ENCODE measurements at regions of chr10 and their contacts with region 1.

Region 1: GRCh38 chr10:17353559-17354300 is 100.7 kb downstream of the ST8SIA6 start:
- DNase-seq: no peak
- ATAC-seq: no peak
- H3K4me3 Mint-ChIP-seq: no peak overlapping the region
- H3K27ac Mint-ChIP-seq: no peak overlapping the region
- H3K4me1 Mint-ChIP-seq: peaks cover 10% of the 10 kb centered on the region
- H3K27me3 Mint-ChIP-seq: peaks cover 19% of the 10 kb centered on the region

Region 2: DNA sequence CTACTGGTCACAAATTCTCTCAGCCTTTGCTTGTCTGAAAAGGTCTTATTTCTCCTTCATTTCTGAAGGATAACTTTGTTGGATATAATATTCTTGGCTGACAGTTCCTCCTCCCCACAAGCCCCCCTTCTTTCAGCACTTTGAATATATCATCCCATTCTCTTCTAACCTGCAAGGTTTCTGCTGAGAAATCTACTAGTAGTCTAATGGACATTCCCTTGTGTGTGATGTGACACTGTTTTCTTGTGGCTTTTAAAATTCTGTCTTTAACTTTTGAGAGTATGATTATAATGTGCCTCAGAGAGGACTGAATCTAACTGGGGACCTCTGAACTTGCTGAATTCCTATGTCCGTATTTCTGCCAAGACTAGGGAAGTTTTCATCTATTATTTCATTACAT is 640.8 kb before region 1 on chr10:
- CTCF ChIA-PET with region 1: no interaction called
- POLR2A ChIA-PET with region 1: no interaction called
- intact Hi-C with region 1: no loop called
- DNase-seq: no peak
- ATAC-seq: no peak
- H3K4me3 Mint-ChIP-seq: no peak overlapping the region
- H3K27ac Mint-ChIP-seq: no peak overlapping the region
- H3K4me1 Mint-ChIP-seq: no peaks in the 10 kb centered on the region
- H3K27me3 Mint-ChIP-seq: no peaks in the 10 kb centered on the region

Region 3: DNA sequence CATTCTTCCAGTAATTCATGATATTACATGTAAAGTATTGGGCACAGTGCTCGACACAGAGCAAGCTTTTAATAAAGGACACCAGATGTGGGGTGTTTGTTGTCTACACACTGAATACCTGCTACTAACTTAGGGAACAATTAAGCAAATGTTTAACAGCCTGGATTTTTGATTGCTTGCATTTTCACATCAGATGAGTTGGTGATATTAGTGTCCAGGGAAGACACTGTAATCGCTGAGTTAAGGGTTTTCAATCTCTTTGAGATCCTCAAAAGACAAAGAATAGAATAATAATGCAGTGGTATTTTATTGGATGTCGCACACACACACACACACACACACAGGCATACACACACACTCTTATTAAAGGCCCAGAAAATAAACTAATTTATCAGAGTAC is 46.6 kb before region 1 on chr10:
- CTCF ChIA-PET with region 1: no interaction called
- POLR2A ChIA-PET with region 1: no interaction called
- intact Hi-C with region 1: no loop called
- DNase-seq: no peak
- ATAC-seq: no peak
- H3K4me3 Mint-ChIP-seq: no peak overlapping the region
- H3K27ac Mint-ChIP-seq: no peak overlapping the region
- H3K4me1 Mint-ChIP-seq: peaks cover 4% of the 10 kb centered on the region
- H3K27me3 Mint-ChIP-seq: peaks cover 14% of the 10 kb centered on the region

Region 4: DNA sequence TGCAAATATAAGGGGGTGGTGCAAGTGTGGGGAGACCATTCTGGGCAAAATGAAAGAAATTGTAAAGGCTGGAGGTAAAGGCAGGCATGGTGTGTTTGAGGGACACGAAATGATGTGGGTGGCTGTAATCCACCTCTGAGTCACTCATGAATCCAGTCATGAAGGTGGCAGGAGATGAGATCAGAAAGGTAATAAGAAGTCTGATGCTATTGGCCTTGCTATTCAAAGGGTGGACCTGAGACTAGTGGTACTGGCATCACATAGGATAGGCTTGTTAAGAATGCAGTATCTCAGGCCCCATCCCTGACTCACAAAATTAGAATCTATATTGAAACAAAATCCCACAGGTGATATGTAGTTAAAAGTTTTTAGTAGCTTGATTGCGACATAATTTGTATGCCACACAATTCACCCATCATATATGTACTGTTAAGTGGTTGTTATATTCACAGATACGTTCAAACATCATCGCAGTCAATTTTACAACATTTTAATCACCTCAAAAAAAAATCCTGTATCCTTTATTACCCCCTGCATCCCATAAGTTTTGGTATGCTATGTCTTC is 15.1 kb after region 1 on chr10:
- CTCF ChIA-PET with region 1: interaction called, 13 read pairs
- POLR2A ChIA-PET with region 1: no interaction called
- intact Hi-C with region 1: no loop called
- DNase-seq: peak; percentile 8
- ATAC-seq: peak; percentile 93
- H3K4me3 Mint-ChIP-seq: no peak overlapping the region
- H3K27ac Mint-ChIP-seq: no peak overlapping the region
- H3K4me1 Mint-ChIP-seq: peaks cover 3% of the 10 kb centered on the region
- H3K27me3 Mint-ChIP-seq: peaks cover 4% of the 10 kb centered on the region